Common myeloid progenitor, CD34-positive (primary cell): ENCODE measurements at regions of chr3 and their contacts with region 1.

Region 1: DNA sequence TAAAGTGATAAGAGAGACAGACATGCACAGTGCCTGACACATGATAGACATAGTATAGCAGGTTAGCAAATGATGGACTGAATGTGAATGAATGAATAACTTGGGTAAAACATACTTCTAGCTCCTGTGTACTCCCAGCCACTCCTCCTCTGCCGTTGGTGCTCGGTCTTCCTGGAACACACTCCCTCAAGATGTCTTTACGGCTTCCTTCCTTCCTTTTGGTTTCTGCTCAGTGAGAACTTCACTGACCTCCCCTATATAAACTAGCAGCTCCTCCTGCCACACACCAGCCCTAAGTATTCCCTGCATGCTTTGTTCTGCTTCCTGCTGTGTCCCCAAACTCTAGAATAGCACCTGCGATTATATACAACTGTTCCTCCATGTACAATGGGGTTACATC is 50.2 kb downstream of the RAD54L2 start:
- DNase-seq: peak in 2 of 3 donors; percentile 40 to 46
- H3K4me3 ChIP-seq: peak overlapping the region in 5 of 7 experiments; percentile 28 to 61 (median 41)
- H3K27ac ChIP-seq: peak overlapping the region in 1 of 2 experiments; percentile 43
- H3K4me1 ChIP-seq: peaks cover 0 to 41% (median 25%) of the 10 kb centered on the region in 4 experiments
- H3K27me3 ChIP-seq: no peaks in the 10 kb centered on the region

Region 2: DNA sequence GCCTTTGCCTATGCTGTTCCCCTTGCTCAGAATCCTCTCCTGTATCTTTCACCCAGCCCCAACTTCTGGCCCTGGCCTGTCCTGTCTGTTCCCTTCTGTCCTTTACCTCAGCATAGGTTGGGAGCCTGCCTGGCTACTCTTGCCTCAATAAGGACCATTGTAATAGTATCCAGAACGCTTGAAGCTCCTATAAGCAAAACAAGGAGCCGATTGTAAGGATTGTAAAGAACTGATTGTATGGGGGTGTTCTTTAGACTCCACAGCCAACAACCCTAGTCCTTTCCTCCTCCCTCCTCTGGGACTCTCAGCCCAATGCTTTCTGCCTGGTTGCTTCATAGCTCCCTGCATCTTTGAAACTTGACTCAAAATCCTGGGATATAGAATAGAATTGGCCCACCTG is 68.9 kb before region 1 on chr3:
- CTCF ChIA-PET with region 1: no interaction called
- POLR2A ChIA-PET with region 1: no interaction called
- DNase-seq: no peak
- H3K4me3 ChIP-seq: no peak overlapping the region
- H3K27ac ChIP-seq: no peak overlapping the region
- H3K4me1 ChIP-seq: peaks cover 0 to 11% (median 6%) of the 10 kb centered on the region in 4 experiments
- H3K27me3 ChIP-seq: no peaks in the 10 kb centered on the region

Region 3: GRCh38 chr3:51605938-51606337 is 17.2 kb after region 1 on chr3:
- CTCF ChIA-PET with region 1: interaction called, 10 read pairs
- POLR2A ChIA-PET with region 1: interaction called, 4 read pairs
- DNase-seq: no peak
- H3K4me3 ChIP-seq: no peak overlapping the region
- H3K27ac ChIP-seq: peak overlapping the region in 1 of 2 experiments; percentile 11
- H3K4me1 ChIP-seq: peaks cover 0 to 8% (median 3%) of the 10 kb centered on the region in 4 experiments
- H3K27me3 ChIP-seq: no peaks in the 10 kb centered on the region